Prostate gland (tissue), 2 donors: ENCODE measurements at regions of chr6 and their contacts with region 1.

Region 1: GRCh38 chr6:20401205-20402091 is at the start of gene E2F3:
- DNase-seq: peak; percentile 100
- H3K4me3 ChIP-seq: peak within 1 kb of the TSS; percentile 68
- H3K27ac ChIP-seq: peak within 1 kb of the TSS; percentile 82 to 86
- H3K4me1 ChIP-seq: no peaks in the 10 kb centered on the region
- H3K27me3 ChIP-seq: no peaks in the 10 kb centered on the region
- CTCF ChIP-seq: no peak
- POLR2A ChIP-seq: peak; percentile 84
- total RNA-seq, gene E2F3: 3.7 to 5.5 TPM

Region 2: DNA sequence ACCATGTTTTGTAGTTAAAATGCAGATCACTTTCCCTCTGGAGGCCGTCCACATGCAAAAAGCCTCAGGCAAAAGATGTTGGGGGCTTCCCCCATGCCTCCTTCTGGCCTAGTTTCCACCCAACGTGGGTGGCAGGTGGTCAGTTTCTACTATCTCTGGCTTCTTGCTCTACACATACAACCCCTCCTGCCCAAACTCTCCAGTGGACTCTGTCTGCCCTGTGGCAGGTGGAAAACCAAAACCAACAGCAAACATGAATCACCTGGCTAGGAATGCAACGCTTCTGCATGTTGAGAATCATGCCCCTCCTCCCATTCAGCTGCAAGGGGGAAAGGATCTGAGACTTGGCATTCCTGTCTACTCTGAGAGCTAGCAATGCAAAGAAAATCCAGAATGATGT is 284.0 kb before region 1 on chr6:
- intact Hi-C with region 1: loop called (anchors 10 kb)
- DNase-seq: no peak
- H3K4me3 ChIP-seq: no peak overlapping the region
- H3K27ac ChIP-seq: no peak overlapping the region
- H3K4me1 ChIP-seq: no peaks in the 10 kb centered on the region
- H3K27me3 ChIP-seq: no peaks in the 10 kb centered on the region
- CTCF ChIP-seq: no peak
- POLR2A ChIP-seq: no peak

Region 3: GRCh38 chr6:20291764-20292580 is 109.5 kb before region 1 on chr6:
- intact Hi-C with region 1: loop called (anchors 5 kb)
- DNase-seq: peak; percentile 74
- H3K4me3 ChIP-seq: no peak overlapping the region
- H3K27ac ChIP-seq: no peak overlapping the region
- H3K4me1 ChIP-seq: no peaks in the 10 kb centered on the region
- H3K27me3 ChIP-seq: no peaks in the 10 kb centered on the region
- CTCF ChIP-seq: peak; percentile 79 to 88 (median 84)
- POLR2A ChIP-seq: no peak

Region 4: GRCh38 chr6:20302702-20303251 is 98.7 kb before region 1 on chr6:
- intact Hi-C with region 1: no loop called
- DNase-seq: no peak
- H3K4me3 ChIP-seq: no peak overlapping the region
- H3K27ac ChIP-seq: no peak overlapping the region
- H3K4me1 ChIP-seq: no peaks in the 10 kb centered on the region
- H3K27me3 ChIP-seq: no peaks in the 10 kb centered on the region
- CTCF ChIP-seq: no peak
- POLR2A ChIP-seq: no peak

Region 5: DNA sequence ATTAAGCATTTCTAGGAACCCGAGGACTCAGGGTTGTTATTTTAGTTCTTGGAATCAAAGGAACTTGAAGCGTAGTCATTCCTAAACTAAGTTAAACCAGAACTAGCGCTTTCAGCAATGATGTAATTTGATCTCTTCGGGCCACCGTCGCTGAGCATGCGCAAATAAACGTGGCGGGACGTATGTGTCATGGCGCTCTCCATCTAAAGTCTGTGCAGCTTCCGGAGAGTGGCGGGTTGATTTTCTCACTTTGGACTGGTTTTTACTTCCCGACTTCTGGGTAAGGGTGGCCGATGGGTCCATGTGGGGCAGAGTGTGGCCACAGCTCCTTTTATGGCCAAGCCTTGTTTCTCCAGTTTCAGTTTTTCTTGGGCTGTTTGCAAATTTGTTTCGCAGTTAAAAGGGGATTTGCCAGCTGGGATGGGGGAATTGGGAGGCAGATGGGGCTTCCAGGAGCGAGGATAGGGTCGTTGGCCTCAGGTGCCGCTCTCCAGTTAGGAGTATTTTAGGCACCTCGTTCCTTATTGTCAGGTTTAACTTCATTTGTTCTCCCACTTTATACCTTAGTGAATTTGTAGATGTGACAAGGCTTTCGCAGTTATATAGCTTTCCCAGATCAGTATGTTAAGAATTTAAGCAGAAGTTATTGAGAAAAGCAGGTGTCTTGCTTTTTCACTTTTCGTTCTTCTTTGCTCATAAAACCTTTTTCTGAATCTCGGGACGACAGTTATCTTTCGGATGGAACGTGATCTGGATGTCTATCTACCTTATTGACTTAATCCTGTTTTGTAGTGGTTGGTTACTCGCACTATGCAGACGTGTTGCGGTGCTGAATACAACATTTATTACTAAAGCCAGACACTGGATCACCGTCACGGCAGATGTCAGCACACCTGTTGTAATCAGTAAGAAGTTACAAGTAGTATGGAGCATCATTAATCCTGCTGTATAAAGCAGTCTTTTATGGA is 133.1 kb after region 1 on chr6 and contains the start of gene CDKAL1:
- intact Hi-C with region 1: loop called (anchors 5 kb)
- DNase-seq: peak; percentile 87
- H3K4me3 ChIP-seq: peak within 1 kb of the TSS; percentile 61 to 80
- H3K27ac ChIP-seq: peak within 1 kb of the TSS; percentile 69 to 86
- H3K4me1 ChIP-seq: no peaks in the 10 kb centered on the region
- H3K27me3 ChIP-seq: no peaks in the 10 kb centered on the region
- CTCF ChIP-seq: peak in 1 of 4 experiments; percentile 22
- POLR2A ChIP-seq: no peak
- total RNA-seq, gene CDKAL1: 12.1 to 19.0 TPM